ENCODE measurements at regions of chr7 and their contacts with region 1.

Region 1: DNA sequence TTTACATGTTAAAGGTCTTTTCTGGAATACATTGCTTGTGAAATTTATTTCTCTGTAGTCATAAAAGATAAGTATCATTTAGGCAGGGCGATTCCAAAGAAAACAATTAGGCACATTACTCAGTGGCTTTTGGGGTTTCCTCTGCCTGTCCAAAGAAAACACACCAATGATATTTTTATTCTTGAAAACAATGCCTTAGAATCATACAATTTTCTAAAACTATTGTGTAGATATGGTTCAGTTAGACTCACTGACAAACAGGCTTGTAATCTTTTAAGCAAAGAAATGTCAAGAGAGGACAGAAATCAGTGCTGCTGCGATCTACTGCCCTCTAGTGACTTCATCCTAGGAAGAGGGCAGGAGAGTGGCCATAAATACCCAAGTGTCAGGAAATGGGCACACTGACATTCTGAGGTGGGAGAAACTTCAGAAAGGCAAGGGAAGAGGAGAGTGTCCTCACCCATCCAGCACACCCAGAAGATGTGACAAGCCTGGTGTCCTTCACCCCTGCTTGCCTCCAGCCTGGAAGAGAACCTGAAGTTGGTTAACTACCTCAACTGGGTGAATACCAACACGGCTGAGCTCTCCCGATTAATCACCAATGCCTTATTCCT is 120.5 kb downstream of the GALNT11 start:
- DNase-seq: peak; percentile 28
- H3K4me3 ChIP-seq: no peak overlapping the region
- H3K27ac ChIP-seq: peak overlapping the region in 1 of 4 donors; percentile 14
- H3K4me1 ChIP-seq: peaks cover 0 to 11% (median 0%) of the 10 kb centered on the region in 4 donors
- H3K27me3 ChIP-seq: no peaks in the 10 kb centered on the region
- CTCF ChIP-seq: peak; percentile 32 to 55 (median 53)
- EP300 ChIP-seq: no peak
- POLR2A ChIP-seq: no peak

Region 2: GRCh38 chr7:152025077-152025936 is 120.7 kb before region 1 on chr7 and contains the start of gene GALNT11:
- in situ Hi-C with region 1: no loop called
- intact Hi-C with region 1: loop called (anchors 10 kb)
- DNase-seq: peak; percentile 89
- H3K4me3 ChIP-seq: peak within 1 kb of the TSS; percentile 70 to 94 (median 78)
- H3K27ac ChIP-seq: peak within 1 kb of the TSS; percentile 89 to 92 (median 90)
- H3K4me1 ChIP-seq: peaks cover 6 to 14% (median 9%) of the 10 kb centered on the region in 4 donors
- H3K27me3 ChIP-seq: no peaks in the 10 kb centered on the region
- CTCF ChIP-seq: peak in 3 of 5 experiments; percentile 11 to 24 (median 13)
- EP300 ChIP-seq: no peak
- POLR2A ChIP-seq: peak; percentile 50
- total RNA-seq, gene GALNT11: 14.7 to 36.2 (median 24.0) TPM

Region 3: GRCh38 chr7:152402384-152403250 is 256.7 kb after region 1 on chr7:
- in situ Hi-C with region 1: no loop called
- intact Hi-C with region 1: no loop called
- DNase-seq: no peak
- H3K4me3 ChIP-seq: no peak overlapping the region
- H3K27ac ChIP-seq: no peak overlapping the region
- H3K4me1 ChIP-seq: peaks cover 0 to 5% (median 0%) of the 10 kb centered on the region in 4 donors
- H3K27me3 ChIP-seq: no peaks in the 10 kb centered on the region
- CTCF ChIP-seq: no peak
- EP300 ChIP-seq: no peak
- POLR2A ChIP-seq: no peak